Mammary epithelial cell (primary cell): ENCODE measurements at regions of chr12 and their contacts with region 1.

Region 1: GRCh38 chr12:42482445-42483237 is 106.9 kb downstream of the PRICKLE1 start:
- DNase-seq: peak; percentile 56
- H3K4me3 ChIP-seq: peak overlapping the region; percentile 65 to 89 (median 88)
- H3K27ac ChIP-seq: peak overlapping the region; percentile 73
- H3K4me1 ChIP-seq: peaks cover 32% of the 10 kb centered on the region
- H3K27me3 ChIP-seq: no peaks in the 10 kb centered on the region
- CTCF ChIP-seq: peak; percentile 50 to 89

Region 2: GRCh38 chr12:42129595-42130204 is 352.9 kb before region 1 on chr12:
- CTCF ChIA-PET with region 1: no interaction called
- dilution Hi-C with region 1: no loop called
- in situ Hi-C with region 1: no loop called
- intact Hi-C with region 1: loop called (anchors 5 kb)
- DNase-seq: peak; percentile 61
- H3K4me3 ChIP-seq: no peak overlapping the region
- H3K27ac ChIP-seq: peak overlapping the region; percentile 75
- H3K4me1 ChIP-seq: peaks cover 25% of the 10 kb centered on the region
- H3K27me3 ChIP-seq: no peaks in the 10 kb centered on the region
- CTCF ChIP-seq: peak; percentile 80 to 88

Region 3: DNA sequence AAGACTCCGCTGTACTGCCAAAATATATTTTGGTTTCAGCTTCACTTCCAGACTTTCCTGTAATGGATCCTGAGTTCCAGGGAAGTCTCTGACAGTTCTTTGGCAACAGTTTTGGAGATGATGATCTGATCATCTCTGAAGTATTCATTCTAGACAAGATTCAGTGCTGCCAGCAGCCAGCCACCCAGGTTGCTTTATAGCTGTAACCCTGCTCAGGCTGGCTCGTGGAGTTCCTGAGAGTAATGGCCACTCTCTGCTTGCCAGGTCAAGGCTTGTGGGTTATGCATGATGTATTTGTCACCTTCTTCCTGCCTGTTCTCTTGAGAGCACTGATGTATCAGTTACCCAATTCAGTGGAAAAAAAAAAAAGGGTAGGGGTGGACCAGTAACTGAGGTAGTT is 32.4 kb before region 1 on chr12:
- CTCF ChIA-PET with region 1: no interaction called
- dilution Hi-C with region 1: no loop called
- in situ Hi-C with region 1: no loop called
- intact Hi-C with region 1: no loop called
- DNase-seq: peak; percentile 31
- H3K4me3 ChIP-seq: no peak overlapping the region
- H3K27ac ChIP-seq: no peak overlapping the region
- H3K4me1 ChIP-seq: no peaks in the 10 kb centered on the region
- H3K27me3 ChIP-seq: no peaks in the 10 kb centered on the region
- CTCF ChIP-seq: no peak

Region 4: DNA sequence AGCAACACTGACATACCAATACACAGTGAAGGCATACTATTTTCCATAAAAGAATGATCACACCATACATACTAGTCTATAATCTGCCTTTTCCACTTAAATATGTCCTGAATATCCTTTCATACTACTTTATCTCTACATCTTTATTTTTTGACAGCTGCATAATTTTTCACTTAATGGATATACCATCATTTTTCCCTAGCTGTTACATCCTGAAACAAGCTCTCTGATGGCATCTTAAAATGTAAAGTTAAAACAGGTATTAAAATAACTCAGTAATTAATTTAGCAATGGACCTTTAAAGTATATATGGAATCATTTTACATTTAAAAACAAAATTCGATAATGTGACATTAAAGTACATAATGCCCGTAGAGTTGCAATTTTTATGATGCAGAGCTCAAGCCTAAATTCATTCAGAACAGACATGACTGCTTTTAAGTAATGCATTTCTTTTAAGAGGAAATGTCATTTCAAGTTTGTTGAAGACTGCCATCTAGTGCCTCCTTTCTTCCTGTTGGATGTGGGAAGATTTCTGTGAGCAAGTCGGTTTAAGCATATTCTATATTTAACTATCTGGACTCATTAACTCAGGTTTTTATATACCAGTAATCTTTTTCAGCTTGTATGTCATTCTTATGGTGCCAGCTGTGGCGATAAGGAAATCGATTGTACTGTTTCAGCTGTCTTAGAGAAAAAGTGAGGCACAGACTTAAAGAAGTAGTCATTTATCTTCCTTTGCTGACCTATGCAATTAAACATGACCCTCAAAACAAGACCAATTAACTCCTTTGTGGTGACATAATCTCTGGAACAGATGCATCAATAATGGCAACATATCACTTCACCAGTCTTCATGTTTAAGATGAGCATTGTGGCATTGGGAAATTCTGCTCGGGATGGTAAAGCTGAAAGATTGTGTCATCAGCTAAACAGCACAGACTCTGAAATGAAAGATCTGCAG is 86.6 kb after region 1 on chr12:
- CTCF ChIA-PET with region 1: interaction called, 4 read pairs
- dilution Hi-C with region 1: no loop called
- in situ Hi-C with region 1: no loop called
- intact Hi-C with region 1: loop called (anchors 1 kb)
- DNase-seq: peak; percentile 48
- H3K4me3 ChIP-seq: no peak overlapping the region
- H3K27ac ChIP-seq: no peak overlapping the region
- H3K4me1 ChIP-seq: peaks cover 8% of the 10 kb centered on the region
- H3K27me3 ChIP-seq: no peaks in the 10 kb centered on the region
- CTCF ChIP-seq: peak; percentile 37 to 65

Region 5: DNA sequence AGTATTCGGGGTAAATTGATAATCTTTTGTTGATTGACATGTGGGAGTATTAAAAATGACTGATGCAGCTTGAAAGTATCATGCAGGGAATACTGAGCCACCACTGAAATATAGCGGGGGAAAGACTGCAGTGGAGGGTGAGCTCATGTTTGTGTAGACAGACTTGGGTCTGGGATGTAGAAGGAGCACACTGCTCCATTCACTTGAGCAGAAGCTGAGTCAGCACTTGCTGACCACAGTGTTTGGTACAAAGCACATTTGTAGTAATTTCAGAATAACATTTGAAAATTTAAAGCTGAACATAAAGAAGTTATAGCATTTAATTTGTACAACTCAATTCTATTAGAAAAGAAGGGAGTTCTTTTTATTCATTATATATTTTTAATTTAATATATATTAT is 411.2 kb after region 1 on chr12:
- CTCF ChIA-PET with region 1: no interaction called
- dilution Hi-C with region 1: no loop called
- in situ Hi-C with region 1: no loop called
- intact Hi-C with region 1: no loop called
- DNase-seq: peak; percentile 17
- H3K4me3 ChIP-seq: no peak overlapping the region
- H3K27ac ChIP-seq: no peak overlapping the region
- H3K4me1 ChIP-seq: no peaks in the 10 kb centered on the region
- H3K27me3 ChIP-seq: no peaks in the 10 kb centered on the region
- CTCF ChIP-seq: no peak

Region 6: DNA sequence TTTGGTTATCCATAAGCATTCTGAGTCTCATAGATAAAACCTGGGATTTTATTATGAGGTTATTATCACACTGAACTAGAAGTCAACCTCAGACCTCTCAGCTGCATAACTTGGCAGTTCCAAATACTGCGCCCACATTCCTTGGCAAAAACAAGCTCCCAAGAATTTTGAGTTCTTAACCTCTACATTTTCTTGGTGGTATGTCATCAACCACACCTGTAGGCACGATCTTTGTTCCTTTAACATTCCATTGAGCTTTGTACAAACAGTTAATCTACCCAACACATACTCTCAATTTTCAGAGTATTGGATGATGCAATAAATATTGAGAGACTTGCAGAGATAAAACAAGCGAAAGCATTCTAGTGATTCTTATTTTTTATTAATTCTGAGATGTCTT is 478.8 kb after region 1 on chr12:
- CTCF ChIA-PET with region 1: no interaction called
- dilution Hi-C with region 1: no loop called
- in situ Hi-C with region 1: no loop called
- intact Hi-C with region 1: loop called (anchors 2 kb)
- DNase-seq: peak; percentile 95
- H3K4me3 ChIP-seq: no peak overlapping the region
- H3K27ac ChIP-seq: peak overlapping the region; percentile 93
- H3K4me1 ChIP-seq: peaks cover 55% of the 10 kb centered on the region
- H3K27me3 ChIP-seq: no peaks in the 10 kb centered on the region
- CTCF ChIP-seq: no peak

Region 7: DNA sequence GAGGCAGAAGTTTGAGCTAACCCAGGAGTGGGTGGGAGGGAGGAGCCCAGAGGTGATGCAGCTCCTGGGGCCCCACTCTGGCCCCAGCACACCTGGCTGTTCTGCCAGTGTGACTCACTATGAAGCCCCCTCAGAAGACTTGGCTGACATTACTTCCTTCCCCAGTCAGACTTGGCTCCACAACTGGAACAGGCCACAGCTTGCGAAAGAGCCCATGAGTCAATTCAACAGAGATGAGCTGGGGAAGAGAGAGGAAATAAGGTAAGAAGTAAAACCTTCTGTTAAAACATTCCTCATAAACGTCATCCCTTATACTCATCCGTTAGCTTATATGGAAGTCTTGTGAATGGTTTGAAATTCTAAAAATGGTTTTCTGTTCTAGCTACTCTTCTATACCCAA is 823.4 kb after region 1 on chr12:
- CTCF ChIA-PET with region 1: no interaction called
- dilution Hi-C with region 1: no loop called
- in situ Hi-C with region 1: loop called in 1 of 2 experiments (anchors 25 kb)
- intact Hi-C with region 1: no loop called
- DNase-seq: peak; percentile 99
- H3K4me3 ChIP-seq: peak overlapping the region in 1 of 3 experiments; percentile 8
- H3K27ac ChIP-seq: peak overlapping the region; percentile 74
- H3K4me1 ChIP-seq: peaks cover 37% of the 10 kb centered on the region
- H3K27me3 ChIP-seq: no peaks in the 10 kb centered on the region
- CTCF ChIP-seq: no peak